RWPE1 (cell line): ENCODE measurements at regions of chr1 and their contacts with region 1.

Region 1: GRCh38 chr1:198391393-198392046 is 149.0 kb downstream of the ATP6V1G3 start:
- DNase-seq: no peak
- H3K27ac ChIP-seq: no peak overlapping the region
- CTCF ChIP-seq: no peak

Region 2: DNA sequence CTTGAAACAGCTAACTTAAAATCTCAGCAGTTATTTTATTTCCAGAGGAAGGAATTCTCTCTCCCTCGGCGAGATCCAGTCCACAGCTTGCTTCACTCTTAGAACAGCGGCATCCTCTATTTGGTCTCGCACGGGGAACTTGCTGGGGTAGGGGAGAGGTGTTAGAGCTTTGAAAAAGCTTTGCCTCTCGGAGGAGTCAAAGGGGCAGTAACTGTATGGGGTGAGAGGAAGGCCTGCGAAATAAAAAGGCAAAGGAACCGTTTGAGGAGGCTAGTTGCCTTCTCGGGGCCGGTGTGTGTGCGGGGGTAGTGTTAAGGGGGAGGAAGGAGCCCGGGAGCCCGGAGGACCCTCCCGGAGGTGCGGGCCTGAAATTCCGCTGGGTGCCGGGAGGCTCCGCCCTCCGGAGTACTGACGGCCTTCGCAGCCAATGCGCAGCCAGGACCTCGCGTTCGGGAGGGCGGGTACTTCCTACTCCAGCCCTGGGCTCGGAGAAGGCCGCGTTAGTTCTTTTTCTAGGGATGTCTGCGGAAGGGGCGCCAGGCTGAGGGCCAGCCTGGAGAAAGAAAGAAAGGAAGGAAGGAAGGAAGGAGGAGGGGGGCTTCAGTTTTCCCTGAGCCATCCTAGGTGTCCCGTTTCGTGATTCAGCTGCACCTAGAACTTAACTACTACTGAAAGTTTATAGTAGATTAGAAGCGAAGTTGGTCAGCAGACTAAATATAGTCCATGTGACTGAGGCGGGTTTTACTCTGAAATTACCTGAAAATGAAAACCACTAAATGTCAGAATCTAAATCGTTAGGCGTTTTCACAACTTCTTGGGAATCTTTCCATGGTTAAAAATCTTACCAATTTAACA is 232.6 kb before region 1 on chr1:
- CTCF ChIA-PET with region 1: interaction called, 11 read pairs
- POLR2A ChIA-PET with region 1: no interaction called
- DNase-seq: peak; percentile 99
- H3K27ac ChIP-seq: peak overlapping the region; percentile 83
- CTCF ChIP-seq: no peak

Region 3: GRCh38 chr1:198373376-198373775 is 18.1 kb before region 1 on chr1:
- CTCF ChIA-PET with region 1: no interaction called
- POLR2A ChIA-PET with region 1: no interaction called
- DNase-seq: peak; percentile 18
- H3K27ac ChIP-seq: no peak overlapping the region
- CTCF ChIP-seq: no peak